HEK293T (cell line): ENCODE measurements at regions of chr2 and their contacts with region 1.

Region 1: DNA sequence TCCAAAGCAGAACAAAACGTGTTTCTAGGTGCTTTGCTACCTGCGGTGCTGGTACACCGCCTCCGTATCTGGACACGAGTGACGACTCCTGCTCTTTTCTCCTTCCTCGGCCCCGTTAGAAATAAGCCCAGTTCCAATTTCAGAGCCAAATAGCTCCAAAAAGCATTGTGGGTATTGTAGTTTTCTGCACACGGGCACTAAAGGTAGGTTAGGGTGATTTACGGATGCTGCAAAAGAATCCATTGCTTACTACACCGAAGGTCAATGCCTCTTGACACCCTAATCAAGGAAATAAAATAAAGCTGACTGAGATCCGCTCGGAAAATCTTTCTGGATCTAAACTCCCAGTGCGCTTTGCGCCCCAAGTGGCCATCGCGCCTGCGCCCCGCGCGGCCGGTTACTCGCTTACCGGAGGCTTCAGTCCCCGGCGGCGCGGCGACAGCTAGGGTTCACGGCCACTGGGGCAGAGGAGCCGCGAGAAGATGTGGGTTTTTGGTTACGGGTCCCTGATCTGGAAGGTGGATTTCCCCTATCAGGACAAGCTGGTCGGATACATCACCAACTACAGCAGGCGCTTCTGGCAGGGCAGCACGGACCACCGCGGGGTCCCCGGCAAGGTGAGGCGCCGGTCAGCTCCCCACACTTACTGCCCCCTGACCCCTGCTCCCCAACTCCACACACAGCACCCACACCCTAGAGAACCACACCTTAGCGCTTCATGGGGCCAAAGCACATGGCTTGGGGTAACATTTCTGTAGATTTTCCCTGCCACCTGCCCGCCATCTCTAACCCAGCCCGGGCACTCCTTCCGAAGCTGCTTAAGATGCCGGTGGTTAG is at the start of gene CHAC2:
- DNase-seq: peak; percentile 81

Region 2: GRCh38 chr2:53744395-53745065 is 23.1 kb before region 1 on chr2:
- CTCF ChIA-PET with region 1: no interaction called
- POLR2A ChIA-PET with region 1: no interaction called
- DNase-seq: no peak

Region 3: DNA sequence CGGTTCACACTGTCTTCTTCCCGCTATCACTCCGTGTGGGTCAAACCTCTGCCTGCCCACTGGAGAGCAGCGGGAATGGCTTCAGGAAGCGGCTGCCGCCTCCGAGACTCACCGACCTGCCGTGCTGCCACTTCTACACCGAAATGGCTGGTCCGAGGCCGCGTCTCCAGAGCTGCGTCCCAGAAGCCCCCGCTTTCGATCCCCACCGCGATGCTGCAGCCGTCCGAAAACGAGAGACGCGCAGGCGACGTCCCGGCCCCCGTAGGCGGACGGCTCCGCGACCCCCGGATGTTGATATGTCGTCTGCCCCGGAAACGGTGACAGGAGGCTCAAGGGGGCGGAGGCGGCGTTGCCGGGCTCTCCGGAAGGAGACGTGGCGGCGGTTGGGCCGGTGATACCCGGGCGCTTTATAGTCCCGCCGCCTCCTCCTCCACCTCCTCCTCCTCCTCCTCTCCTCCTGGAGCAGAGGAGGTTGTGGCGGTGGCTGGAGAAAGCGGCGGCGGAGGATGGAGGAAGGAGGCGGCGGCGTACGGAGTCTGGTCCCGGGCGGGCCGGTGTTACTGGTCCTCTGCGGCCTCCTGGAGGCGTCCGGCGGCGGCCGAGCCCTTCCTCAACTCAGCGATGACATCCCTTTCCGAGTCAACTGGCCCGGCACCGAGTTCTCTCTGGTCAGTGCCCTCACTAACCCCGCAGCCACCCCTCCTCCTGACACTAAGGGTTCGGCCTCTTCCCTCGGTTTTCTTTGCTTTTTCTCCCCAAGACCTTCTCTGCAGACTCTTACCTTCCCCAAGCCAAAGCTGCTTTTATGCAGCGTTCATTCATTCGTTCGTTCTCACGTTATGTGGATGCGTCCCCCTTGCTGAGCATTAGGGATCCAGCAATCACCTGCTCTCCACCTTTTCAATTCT is 19.3 kb after region 1 on chr2 and contains the starts of genes ASB3 and ERLEC1:
- CTCF ChIA-PET with region 1: no interaction called
- POLR2A ChIA-PET with region 1: interaction called, 23 read pairs
- DNase-seq: peak; percentile 85

Region 4: GRCh38 chr2:53970724-53971602 is 203.3 kb after region 1 on chr2 and contains the start of gene PSME4:
- CTCF ChIA-PET with region 1: no interaction called
- POLR2A ChIA-PET with region 1: no interaction called
- DNase-seq: peak; percentile 87